Heart right ventricle (tissue), 16 donors: ENCODE measurements at regions of chr1 and their contacts with region 1.

Region 1: GRCh38 chr1:45913183-45913683 is 109.8 kb downstream of the MAST2 start:
- DNase-seq: peak; percentile 22 to 85
- ATAC-seq: peak; percentile 91 to 96 (median 95)
- H3K4me3 ChIP-seq: peak overlapping the region in 9 of 10 donors; percentile 16 to 47 (median 36)
- H3K27ac ChIP-seq: peak overlapping the region; percentile 64 to 91 (median 86)
- H3K4me1 ChIP-seq: peaks cover 0 to 32% (median 11%) of the 10 kb centered on the region in 9 donors
- H3K27me3 ChIP-seq: no peaks in the 10 kb centered on the region
- CTCF ChIP-seq: no peak

Region 2: GRCh38 chr1:46021046-46021996 is 108.1 kb after region 1 on chr1:
- intact Hi-C with region 1: loop called in 2 of 10 experiments (anchors 2 to 10 kb)
- DNase-seq: no peak
- ATAC-seq: peak in 2 of 8 donors; percentile 33 to 71
- H3K4me3 ChIP-seq: no peak overlapping the region
- H3K27ac ChIP-seq: peak overlapping the region in 5 of 10 donors; percentile 3 to 43 (median 18)
- H3K4me1 ChIP-seq: peaks cover 0 to 48% (median 23%) of the 10 kb centered on the region in 9 donors
- H3K27me3 ChIP-seq: no peaks in the 10 kb centered on the region
- CTCF ChIP-seq: peak in 2 of 9 donors; percentile 16 to 30

Region 3: DNA sequence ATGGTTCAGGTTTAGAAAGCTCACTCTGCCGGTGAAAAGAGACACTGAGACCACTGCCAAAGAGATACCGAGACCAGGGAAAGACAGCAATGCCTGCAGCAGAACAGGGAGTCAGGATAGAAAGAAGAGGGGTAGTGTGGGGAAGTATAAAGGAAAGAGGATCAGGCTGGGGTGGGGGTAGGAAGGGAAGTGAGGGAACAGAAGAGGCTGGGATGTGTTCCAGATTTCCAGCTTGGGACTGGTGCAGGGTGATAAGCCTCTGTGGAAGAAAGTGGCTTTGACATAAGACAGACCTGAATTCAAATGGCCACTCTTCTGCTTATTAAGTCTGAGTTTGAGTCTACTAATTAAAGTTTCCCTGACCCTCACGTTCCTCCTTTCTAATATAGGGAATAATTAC is 113.3 kb after region 1 on chr1:
- intact Hi-C with region 1: loop called in 2 of 10 experiments (anchors 2 to 10 kb)
- DNase-seq: peak in 1 of 2 donors; percentile 73
- ATAC-seq: peak; percentile 65 to 86 (median 76)
- H3K4me3 ChIP-seq: no peak overlapping the region
- H3K27ac ChIP-seq: peak overlapping the region; percentile 15 to 86 (median 80)
- H3K4me1 ChIP-seq: peaks cover 2 to 42% (median 29%) of the 10 kb centered on the region in 9 donors
- H3K27me3 ChIP-seq: no peaks in the 10 kb centered on the region
- CTCF ChIP-seq: no peak